ENCODE measurements at regions of chr12 and their contacts with region 1.

Region 1: DNA sequence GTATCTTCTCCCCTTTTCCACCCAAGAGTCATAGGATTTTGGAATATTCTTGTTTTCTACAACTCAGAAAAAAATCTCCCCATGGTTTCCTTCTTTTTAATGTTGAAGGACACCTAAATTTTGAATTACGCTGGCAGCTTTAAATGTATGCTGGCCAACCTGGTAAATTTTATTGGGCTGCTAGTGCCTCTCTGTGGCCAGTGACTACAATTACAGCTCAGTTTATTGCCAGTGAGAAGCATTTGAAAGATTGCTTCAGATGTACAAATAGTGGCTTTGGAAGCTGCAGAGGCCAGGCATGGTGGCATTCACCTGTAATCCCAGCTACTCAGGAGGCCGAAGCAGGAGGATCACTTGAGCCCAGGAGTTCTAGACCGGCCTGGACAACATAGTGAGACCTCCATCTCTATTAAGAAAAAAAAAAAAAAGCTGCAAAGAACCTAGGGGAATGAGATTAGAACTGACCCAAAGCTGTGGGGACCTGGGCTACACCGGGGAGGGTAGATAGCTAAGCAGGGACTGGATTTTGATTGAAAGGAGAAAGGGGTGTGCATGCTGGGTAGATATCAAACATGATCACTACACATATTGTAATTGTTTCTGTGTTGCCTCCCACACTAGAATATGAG is 7.6 kb upstream of the RAB21 start:
- DNase-seq: peak; percentile 80
- H3K4me3 ChIP-seq: no peak overlapping the region
- H3K27ac ChIP-seq: no peak overlapping the region
- H3K4me1 ChIP-seq: no peaks in the 10 kb centered on the region
- H3K27me3 ChIP-seq: no peaks in the 10 kb centered on the region

Region 2: GRCh38 chr12:71415336-71416231 is 331.5 kb before region 1 on chr12:
- in situ Hi-C with region 1: loop called (anchors 25 kb)
- DNase-seq: peak; percentile 85
- H3K4me3 ChIP-seq: no peak overlapping the region
- H3K27ac ChIP-seq: no peak overlapping the region
- H3K4me1 ChIP-seq: no peaks in the 10 kb centered on the region
- H3K27me3 ChIP-seq: no peaks in the 10 kb centered on the region

Measured in GM23248 (cell line).